ENCODE measurements at regions of chr9 and their contacts with region 1.

Region 1: DNA sequence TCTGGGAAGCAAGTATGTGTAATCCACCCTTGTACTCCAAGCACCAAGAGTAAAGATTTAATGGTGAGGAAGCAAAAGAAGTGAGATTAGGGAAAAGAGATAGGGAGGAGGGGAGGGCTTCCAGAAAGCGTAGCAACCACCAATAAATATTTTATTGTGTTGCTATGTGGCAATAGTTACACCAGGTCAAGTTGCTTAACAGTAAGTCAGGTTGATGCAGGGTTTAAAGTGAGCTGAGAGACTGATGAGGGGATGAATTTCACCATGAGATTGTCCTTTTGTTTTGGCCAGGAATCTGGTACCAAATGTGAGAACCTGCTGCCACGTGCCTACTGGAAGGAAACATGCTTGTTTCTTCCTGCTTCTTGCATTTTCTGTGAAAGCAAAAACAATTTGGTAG is 62.7 kb downstream of the PCSK5 start:
- DNase-seq: peak; percentile 3
- ATAC-seq: no peak
- H3K4me3 ChIP-seq: no peak overlapping the region
- H3K27ac ChIP-seq: no peak overlapping the region
- H3K4me1 ChIP-seq: peaks cover 10% of the 10 kb centered on the region
- H3K27me3 ChIP-seq: no peaks in the 10 kb centered on the region; a peak in 1 of 5 replicates
- CTCF ChIP-seq: no peak
- EP300 ChIP-seq: no peak
- POLR2A ChIP-seq: no peak
- RAD21 ChIP-seq: no peak

Region 2: DNA sequence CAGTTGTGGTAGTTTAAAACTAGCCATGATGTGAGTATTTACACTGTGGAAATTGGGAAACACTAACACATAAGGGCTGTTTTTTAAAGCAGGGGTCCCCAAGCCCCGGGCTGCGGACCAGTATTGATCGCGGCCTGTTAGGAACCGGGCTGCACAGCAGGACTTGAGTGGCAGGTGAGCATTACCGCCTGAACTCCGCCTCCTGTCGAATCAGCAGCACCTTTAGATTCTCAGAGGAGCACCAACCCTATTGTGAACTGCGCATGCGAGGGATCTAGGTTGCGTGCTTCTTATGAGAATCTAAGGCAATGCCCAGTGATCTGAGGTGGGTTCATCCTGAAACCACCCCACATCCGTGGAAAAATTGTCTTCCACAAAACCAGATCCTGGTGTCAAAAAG is 65.0 kb after region 1 on chr9:
- CTCF ChIA-PET with region 1: no interaction called
- POLR2A ChIA-PET with region 1: no interaction called
- in situ Hi-C with region 1: no loop called
- intact Hi-C with region 1: loop called (anchors 10 kb)
- DNase-seq: no peak
- ATAC-seq: no peak
- H3K4me3 ChIP-seq: no peak overlapping the region
- H3K27ac ChIP-seq: no peak overlapping the region
- H3K4me1 ChIP-seq: peaks cover 3% of the 10 kb centered on the region
- H3K27me3 ChIP-seq: no peaks in the 10 kb centered on the region
- CTCF ChIP-seq: no peak
- EP300 ChIP-seq: no peak
- POLR2A ChIP-seq: no peak
- RAD21 ChIP-seq: no peak

Region 3: GRCh38 chr9:76198336-76198735 is 245.1 kb after region 1 on chr9:
- CTCF ChIA-PET with region 1: no interaction called
- POLR2A ChIA-PET with region 1: no interaction called
- in situ Hi-C with region 1: no loop called
- intact Hi-C with region 1: no loop called
- DNase-seq: no peak
- ATAC-seq: no peak
- H3K4me3 ChIP-seq: no peak overlapping the region
- H3K27ac ChIP-seq: no peak overlapping the region
- H3K4me1 ChIP-seq: no peaks in the 10 kb centered on the region
- H3K27me3 ChIP-seq: no peaks in the 10 kb centered on the region
- CTCF ChIP-seq: no peak
- EP300 ChIP-seq: no peak
- POLR2A ChIP-seq: no peak
- RAD21 ChIP-seq: no peak

Measured in HepG2 (cell line).